ENCODE measurements at regions of chr11 and their contacts with region 1.

Region 1: GRCh38 chr11:103682318-103683184 is 353.9 kb upstream of the DDI1 start:
- DNase-seq: peak; percentile 2 to 88 (median 72)

Region 2: GRCh38 chr11:103594283-103594682 is 88.3 kb before region 1 on chr11:
- intact Hi-C with region 1: no loop called
- DNase-seq: no peak

Region 3: GRCh38 chr11:103619480-103619879 is 63.1 kb before region 1 on chr11:
- intact Hi-C with region 1: no loop called
- DNase-seq: peak in 23 of 42 donors; percentile 1 to 55 (median 13)

Region 4: GRCh38 chr11:104151404-104152204 is 469.1 kb after region 1 on chr11:
- intact Hi-C with region 1: loop called (anchors 10 kb)
- DNase-seq: no peak